ENCODE measurements at regions of chr6 and their contacts with region 1.

Region 1: DNA sequence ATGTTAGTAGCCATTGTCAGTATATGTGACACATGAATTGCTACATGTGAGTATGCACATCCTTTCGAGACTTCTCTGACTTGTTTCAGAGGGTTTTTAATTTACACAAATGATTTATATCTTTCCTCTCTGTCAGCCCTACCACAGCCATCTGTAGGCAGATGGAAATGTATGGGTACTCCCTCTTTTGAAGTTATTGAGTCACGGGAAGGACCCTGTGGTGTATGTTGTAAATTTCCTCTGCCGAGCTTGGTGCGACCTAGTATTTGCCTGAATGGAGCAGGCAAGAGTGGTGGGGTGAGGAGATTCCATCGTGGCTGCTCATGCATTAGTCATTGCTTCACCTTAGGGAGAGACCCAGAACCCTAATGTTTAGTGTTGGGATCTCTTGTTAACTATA is 171.9 kb downstream of the JARID2 start:
- DNase-seq: peak; percentile 96
- ATAC-seq: peak; percentile 96
- H3K4me3 ChIP-seq: no peak overlapping the region
- H3K27ac ChIP-seq: peak overlapping the region; percentile 40
- H3K4me1 ChIP-seq: peaks cover 17% of the 10 kb centered on the region
- H3K27me3 ChIP-seq: no peaks in the 10 kb centered on the region
- CTCF ChIP-seq: no peak

Region 2: DNA sequence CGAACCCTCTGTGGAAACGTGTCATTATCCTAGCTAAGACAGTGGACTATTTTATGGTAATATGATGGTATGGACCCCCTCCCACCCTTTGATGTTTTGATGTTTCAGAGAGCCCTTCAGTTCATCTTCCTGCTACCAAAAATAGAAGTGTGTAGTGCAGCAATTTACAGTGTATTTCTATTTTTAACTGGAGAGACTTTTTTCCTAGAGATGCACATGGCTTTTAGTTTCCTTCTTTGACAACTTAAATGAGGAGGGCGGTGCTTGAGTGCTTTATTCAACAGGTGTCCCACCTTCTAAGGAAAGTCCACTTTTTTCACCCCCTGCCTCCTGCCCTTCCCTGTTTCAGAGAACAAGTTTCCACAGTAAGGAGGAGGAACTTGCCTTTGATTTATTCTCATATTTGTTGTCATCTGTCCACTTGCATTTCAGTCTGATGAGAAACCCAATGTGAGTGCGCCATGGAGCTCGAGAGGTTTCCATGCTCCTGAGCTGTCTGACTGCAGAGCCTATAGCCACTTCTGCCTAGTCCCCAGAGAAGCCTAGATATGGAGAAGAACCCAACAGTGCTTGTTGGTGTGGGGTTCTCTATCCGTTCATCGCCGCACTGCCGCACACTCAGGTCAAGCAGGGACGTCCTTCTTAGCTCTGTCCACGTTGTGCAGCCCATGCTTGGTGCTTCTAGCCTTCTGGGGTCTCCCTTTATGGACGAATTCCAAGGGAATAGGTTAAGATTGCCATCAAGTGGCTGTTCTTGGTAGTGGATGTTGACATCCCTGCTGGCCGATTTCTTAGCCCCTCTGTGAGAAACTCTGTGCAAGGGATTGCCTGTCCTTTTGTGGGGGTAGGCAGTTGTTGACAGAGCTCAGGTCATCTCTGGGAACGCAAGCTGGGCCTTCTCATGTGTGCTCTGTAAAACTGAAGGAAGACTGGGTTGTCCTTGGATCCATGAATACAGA is 27.8 kb before region 1 on chr6:
- CTCF ChIA-PET with region 1: no interaction called
- POLR2A ChIA-PET with region 1: no interaction called
- intact Hi-C with region 1: no loop called
- DNase-seq: peak; percentile 49
- ATAC-seq: peak; percentile 64
- H3K4me3 ChIP-seq: no peak overlapping the region
- H3K27ac ChIP-seq: no peak overlapping the region
- H3K4me1 ChIP-seq: no peaks in the 10 kb centered on the region; the same call in 1 of the 2 replicates
- H3K27me3 ChIP-seq: no peaks in the 10 kb centered on the region
- CTCF ChIP-seq: peak; percentile 86

Region 3: DNA sequence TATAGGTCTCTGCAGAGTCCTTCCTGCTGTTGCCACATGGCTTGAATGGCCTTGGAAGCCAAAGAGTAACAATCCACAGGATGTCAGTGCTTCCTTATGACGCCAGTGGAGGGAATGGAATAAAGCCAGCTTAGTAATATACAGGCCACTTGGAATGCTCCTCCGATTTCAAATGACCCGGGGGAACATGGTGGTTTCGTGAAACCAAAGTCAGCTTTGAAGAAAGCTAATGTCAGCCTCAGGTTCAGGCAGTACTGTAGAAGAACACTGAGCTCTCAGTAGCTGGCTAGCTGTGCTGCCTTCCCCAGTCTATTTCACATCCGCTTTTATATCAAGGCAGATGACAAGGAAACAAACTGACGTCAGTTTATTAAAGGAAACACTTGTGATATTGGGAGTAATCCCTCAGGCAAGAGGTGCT is 55.9 kb after region 1 on chr6:
- CTCF ChIA-PET with region 1: no interaction called
- POLR2A ChIA-PET with region 1: no interaction called
- intact Hi-C with region 1: no loop called
- DNase-seq: peak; percentile 24
- ATAC-seq: no peak
- H3K4me3 ChIP-seq: no peak overlapping the region
- H3K27ac ChIP-seq: no peak overlapping the region
- H3K4me1 ChIP-seq: 0 out of 2 replicates have a peak, but pooled peaks cover 7% of the 10 kb centered on the region
- H3K27me3 ChIP-seq: no peaks in the 10 kb centered on the region
- CTCF ChIP-seq: no peak

Region 4: DNA sequence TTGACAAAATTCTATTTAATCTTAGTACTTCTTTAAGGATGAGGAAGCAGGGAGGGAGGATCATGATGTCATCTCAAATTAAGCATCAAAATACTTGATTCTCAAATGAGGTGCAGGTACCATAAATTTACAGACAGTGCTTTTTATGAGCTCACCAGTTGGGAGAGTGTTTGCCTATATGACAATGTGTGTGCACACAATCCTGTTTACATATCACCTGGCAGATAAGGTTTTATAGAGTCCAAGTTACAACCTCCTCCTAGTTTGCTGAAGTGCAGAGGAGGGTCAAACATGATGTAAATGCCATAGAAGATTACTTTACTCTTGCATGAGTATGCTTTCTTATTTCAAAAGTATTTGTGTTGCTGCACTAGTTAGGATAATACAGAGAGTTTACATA is 1337.1 kb after region 1 on chr6:
- CTCF ChIA-PET with region 1: no interaction called
- POLR2A ChIA-PET with region 1: interaction called, 11 read pairs
- intact Hi-C with region 1: no loop called
- DNase-seq: peak; percentile 87
- ATAC-seq: peak; percentile 48
- H3K4me3 ChIP-seq: peak overlapping the region; percentile 26; the same call in 1 of the 2 replicates
- H3K27ac ChIP-seq: peak overlapping the region; percentile 98
- H3K4me1 ChIP-seq: peaks cover 84% of the 10 kb centered on the region
- H3K27me3 ChIP-seq: no peaks in the 10 kb centered on the region
- CTCF ChIP-seq: no peak

Measured in PC-3 (cell line).